ENCODE measurements at regions of chr11 and their contacts with region 1.

Region 1: GRCh38 chr11:61792310-61793085 is at the starts of genes FEN1 and TMEM258:
- DNase-seq: peak; percentile 97
- total RNA-seq, gene FEN1: 4.6 to 6.0 TPM
- total RNA-seq, gene TMEM258: 78.2 to 84.7 TPM

Region 2: GRCh38 chr11:62001450-62002191 is 209.1 kb after region 1 on chr11:
- intact Hi-C with region 1: no loop called
- DNase-seq: no peak

Region 3: DNA sequence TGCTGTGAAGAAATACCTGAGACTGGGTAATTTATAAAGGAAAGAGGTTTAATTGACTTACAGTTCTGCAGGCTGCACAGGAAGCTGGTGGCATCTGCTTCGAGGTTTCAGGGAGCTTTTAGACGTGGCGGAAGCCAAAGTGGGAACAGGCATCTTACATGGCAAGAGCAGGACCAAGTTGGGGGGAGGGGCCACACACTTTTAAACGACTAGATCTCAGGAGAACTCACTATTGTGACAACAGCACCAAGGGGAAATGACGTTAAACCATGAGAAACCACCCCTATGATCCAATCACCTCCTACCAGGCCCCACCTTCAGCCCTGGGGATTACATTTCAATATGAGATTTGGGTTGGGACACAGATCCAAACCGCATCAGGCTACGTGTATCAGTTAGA is 517.5 kb after region 1 on chr11:
- intact Hi-C with region 1: loop called in 1 of 2 experiments (anchors 5 kb)
- DNase-seq: no peak